ENCODE measurements at regions of chr9 and their contacts with region 1.

Region 1: DNA sequence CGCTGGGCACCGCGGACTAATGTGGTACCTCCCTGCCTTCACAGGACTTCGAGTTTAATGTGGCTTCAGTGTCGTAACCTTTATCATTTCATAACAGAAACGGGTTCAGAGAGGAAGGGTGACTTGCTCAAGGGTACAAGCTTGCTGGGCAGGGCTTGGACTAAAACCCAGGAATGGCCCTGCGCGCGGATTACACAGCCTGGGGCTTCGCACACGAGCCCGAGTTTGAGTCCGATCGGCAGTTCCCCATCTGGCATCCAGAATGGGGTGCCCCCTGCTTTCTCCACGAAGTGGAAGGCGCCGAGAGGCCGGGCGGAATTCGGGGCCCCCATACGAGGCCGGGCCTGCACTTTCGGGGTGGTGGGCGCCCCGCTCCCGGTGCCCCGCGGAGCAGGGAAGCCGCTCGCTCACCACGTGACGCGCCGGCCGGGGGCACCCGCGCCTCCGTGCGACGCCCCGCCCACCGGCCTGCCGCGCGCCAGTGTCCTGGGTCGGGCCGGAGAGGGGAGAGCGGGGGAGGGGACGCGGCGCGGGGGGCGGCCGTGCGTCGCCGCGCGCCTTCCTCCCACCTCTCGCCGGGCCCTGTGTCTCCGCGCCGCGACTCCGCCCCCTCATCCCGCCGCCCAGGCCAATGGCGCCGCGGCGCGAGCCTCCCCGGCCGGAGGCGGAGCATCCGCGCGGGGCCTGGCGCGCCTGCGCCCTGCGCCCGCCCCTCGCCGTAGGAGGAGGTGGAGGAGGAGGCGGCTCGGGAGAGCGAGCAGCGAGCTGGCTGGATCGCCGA is at the start of gene SET:
- DNase-seq: peak; percentile 81 to 97 (median 92)
- ATAC-seq: peak; percentile 78
- H3K4me3 ChIP-seq: peak within 1 kb of the TSS; percentile 68 to 90
- H3K4me3 Mint-ChIP-seq: peak within 1 kb of the TSS; percentile 90
- H3K27ac ChIP-seq: peak within 1 kb of the TSS; percentile 68 to 91
- H3K27ac Mint-ChIP-seq: peak within 1 kb of the TSS; percentile 96
- H3K4me1 ChIP-seq: peaks cover 64% of the 10 kb centered on the region
- H3K4me1 Mint-ChIP-seq: peaks cover 67% of the 10 kb centered on the region
- H3K27me3 ChIP-seq: no peaks in the 10 kb centered on the region
- H3K27me3 Mint-ChIP-seq: no peaks in the 10 kb centered on the region
- CTCF ChIP-seq: no peak
- total RNA-seq, gene SET: 243 to 260 TPM

Region 2: GRCh38 chr9:128702445-128702948 is 13.8 kb after region 1 on chr9 and contains the start of gene PKN3:
- CTCF ChIA-PET with region 1: interaction called, 7 read pairs
- POLR2A ChIA-PET with region 1: interaction called, 7 read pairs
- intact Hi-C with region 1: loop called (anchors 1 to 2 kb)
- DNase-seq: peak; percentile 76 to 91 (median 88)
- ATAC-seq: peak; percentile 85
- H3K4me3 ChIP-seq: peak within 1 kb of the TSS; percentile 49 to 70
- H3K4me3 Mint-ChIP-seq: peak within 1 kb of the TSS; percentile 87
- H3K27ac ChIP-seq: peak within 1 kb of the TSS in 1 of 2 experiments; percentile 51
- H3K27ac Mint-ChIP-seq: peak within 1 kb of the TSS; percentile 52
- H3K4me1 ChIP-seq: peaks cover 16% of the 10 kb centered on the region
- H3K4me1 Mint-ChIP-seq: peaks cover 13% of the 10 kb centered on the region
- H3K27me3 ChIP-seq: no peaks in the 10 kb centered on the region
- H3K27me3 Mint-ChIP-seq: no peaks in the 10 kb centered on the region
- CTCF ChIP-seq: peak; percentile 89
- total RNA-seq, gene PKN3: 1.3 to 2.0 TPM

Region 3: DNA sequence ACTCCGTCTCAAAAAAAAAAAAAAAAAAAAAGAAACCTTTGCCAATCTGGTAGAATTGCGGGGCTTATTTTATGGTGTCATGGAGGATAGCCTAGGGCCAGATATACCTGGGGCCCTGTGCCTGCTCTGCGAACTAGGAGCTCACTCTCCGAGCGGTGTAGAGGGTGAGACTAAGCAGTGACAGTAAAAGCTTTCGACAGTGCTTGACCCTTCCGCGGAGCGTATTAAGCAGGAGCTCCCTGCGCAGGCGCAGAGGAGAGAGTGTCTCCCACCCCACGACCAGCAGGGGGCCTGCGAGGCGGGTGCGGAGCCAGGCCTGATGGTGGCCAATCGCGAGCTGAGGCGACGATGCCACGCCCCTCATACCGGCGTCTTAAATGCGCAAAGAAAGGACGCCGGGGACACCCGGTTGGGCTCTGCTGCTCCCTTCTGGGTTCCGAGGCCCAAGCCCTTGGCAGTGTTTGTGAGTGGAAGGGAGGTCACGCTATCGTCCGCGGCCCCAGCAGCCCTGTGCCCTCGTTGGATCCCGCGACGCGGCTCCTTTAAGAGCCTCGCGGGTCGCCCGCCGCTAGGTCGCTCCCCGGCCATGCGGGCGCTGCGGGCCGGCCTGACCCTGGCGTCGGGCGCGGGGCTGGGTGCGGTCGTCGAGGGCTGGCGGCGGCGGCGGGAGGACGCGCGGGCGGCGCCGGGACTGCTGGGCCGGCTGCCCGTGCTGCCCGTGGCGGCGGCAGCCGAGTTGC is 129.6 kb after region 1 on chr9 and contains the start of gene ENDOG:
- CTCF ChIA-PET with region 1: interaction called, 5 read pairs
- POLR2A ChIA-PET with region 1: interaction called, 7 read pairs
- intact Hi-C with region 1: loop called (anchors 1 to 2 kb)
- DNase-seq: peak; percentile 94 to 98 (median 97)
- ATAC-seq: peak; percentile 96
- H3K4me3 ChIP-seq: peak within 1 kb of the TSS; percentile 59 to 75
- H3K4me3 Mint-ChIP-seq: peak within 1 kb of the TSS; percentile 91
- H3K27ac ChIP-seq: peak within 1 kb of the TSS; percentile 52 to 67
- H3K27ac Mint-ChIP-seq: peak within 1 kb of the TSS; percentile 87
- H3K4me1 ChIP-seq: peaks cover 12% of the 10 kb centered on the region
- H3K4me1 Mint-ChIP-seq: peaks cover 21% of the 10 kb centered on the region
- H3K27me3 ChIP-seq: no peaks in the 10 kb centered on the region
- H3K27me3 Mint-ChIP-seq: no peaks in the 10 kb centered on the region
- CTCF ChIP-seq: peak; percentile 98
- total RNA-seq, gene ENDOG: 6.2 to 6.4 TPM

Measured in CD8-positive, alpha-beta T cell (primary cell).